Right cardiac atrium (tissue), 5 donors: ENCODE measurements at regions of chr12 and their contacts with region 1.

Region 1: GRCh38 chr12:57621497-57622292 is 10.5 kb downstream of the ARHGEF25 start:
- DNase-seq: peak; percentile 57 to 88 (median 88)
- ATAC-seq: peak; percentile 74 to 78
- H3K4me3 ChIP-seq: peak overlapping the region; percentile 8
- H3K27ac ChIP-seq: no peak overlapping the region
- H3K4me1 ChIP-seq: no peaks in the 10 kb centered on the region
- H3K27me3 ChIP-seq: no peaks in the 10 kb centered on the region

Region 2: GRCh38 chr12:57462251-57462911 is 159.3 kb before region 1 on chr12:
- intact Hi-C with region 1: loop called in 1 of 4 experiments (anchors 10 kb)
- DNase-seq: peak; percentile 86 to 93 (median 92)
- ATAC-seq: peak; percentile 76 to 78
- H3K4me3 ChIP-seq: peak overlapping the region; percentile 93
- H3K27ac ChIP-seq: peak overlapping the region; percentile 26
- H3K4me1 ChIP-seq: no peaks in the 10 kb centered on the region
- H3K27me3 ChIP-seq: no peaks in the 10 kb centered on the region

Region 3: DNA sequence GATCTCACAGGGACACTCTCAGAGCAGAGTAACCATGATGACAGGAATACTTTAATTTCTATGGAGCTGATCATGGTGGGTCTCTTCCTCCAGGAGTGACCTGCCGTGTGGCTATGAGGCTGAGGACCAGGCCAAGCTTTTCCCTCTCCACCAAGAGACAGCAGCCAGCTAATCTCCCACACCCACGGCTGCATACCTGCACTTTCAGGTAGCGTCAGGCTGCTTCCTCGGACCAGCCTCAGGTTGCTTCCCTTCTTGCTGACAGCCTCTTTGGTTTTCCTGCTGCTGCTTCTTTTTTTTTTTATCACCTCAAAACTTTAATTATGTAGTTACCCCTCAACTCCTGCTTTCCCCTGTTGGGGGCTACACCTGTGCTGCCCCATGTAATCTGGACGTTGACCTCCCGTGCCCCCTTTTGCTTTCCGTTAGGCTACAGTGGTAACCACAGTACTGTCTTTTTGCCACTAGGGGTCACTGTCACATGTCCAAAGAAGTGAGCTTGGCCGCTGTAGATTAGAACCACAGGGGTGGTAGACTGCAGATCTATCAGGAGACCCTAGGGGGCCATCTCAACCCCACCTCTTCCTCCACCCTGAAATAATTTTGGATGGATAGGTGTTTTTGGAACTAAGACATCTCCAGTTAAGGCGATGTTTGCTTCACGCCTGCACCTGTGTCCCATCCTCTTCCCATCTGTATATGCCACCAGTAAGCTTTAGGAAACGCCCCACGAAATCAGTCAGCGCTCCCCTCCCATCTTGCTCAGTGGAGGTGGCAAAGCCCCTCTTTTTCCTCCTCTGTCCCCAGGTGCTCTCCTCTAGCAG is 38.5 kb before region 1 on chr12:
- intact Hi-C with region 1: loop called (anchors 1 to 5 kb)
- DNase-seq: peak in 2 of 3 donors; percentile 41 to 46
- ATAC-seq: peak; percentile 93 to 94
- H3K4me3 ChIP-seq: no peak overlapping the region
- H3K27ac ChIP-seq: no peak overlapping the region
- H3K4me1 ChIP-seq: no peaks in the 10 kb centered on the region
- H3K27me3 ChIP-seq: no peaks in the 10 kb centered on the region